Caco-2 (cell line): ENCODE measurements at regions of chr10 and their contacts with region 1.

Region 1: DNA sequence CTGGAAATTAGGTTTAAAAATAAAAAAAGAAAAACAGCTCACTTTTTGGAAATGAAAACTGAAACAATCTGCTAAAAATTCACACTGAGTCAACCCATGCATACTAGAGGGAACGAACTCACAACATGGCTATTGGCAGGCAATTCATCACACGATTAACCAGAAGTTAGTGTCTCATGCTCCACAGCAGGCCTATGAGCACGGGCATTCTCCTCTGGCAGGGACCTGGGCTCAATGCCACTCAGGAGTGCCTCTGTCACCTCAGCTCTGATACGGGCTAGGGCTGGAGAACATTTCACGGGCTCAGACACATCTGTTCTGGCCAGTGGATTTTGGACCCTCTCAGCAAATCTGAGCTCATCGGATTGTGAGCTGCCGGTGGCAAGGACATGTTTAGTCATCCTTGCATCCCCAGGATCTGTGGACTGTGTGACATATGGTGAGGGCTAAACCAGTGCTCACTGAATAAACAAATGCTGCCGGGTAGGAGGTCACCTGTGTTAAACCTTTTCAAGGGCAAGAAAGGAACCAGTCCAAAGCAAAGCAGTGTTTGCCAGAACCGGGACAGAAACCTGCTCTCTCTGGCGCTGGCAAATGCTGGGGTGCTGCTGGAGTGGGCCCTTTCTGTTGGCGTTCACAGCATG is 40.1 kb downstream of the POLR3A start:
- DNase-seq: no peak
- H3K4me3 ChIP-seq: no peak overlapping the region
- H3K4me3 Mint-ChIP-seq: no peak overlapping the region
- H3K27ac Mint-ChIP-seq: no peak overlapping the region
- H3K4me1 ChIP-seq: no peaks in the 10 kb centered on the region
- H3K4me1 Mint-ChIP-seq: no peaks in the 10 kb centered on the region
- H3K27me3 ChIP-seq: no peaks in the 10 kb centered on the region
- H3K27me3 Mint-ChIP-seq: no peaks in the 10 kb centered on the region
- CTCF ChIP-seq: no peak

Region 2: DNA sequence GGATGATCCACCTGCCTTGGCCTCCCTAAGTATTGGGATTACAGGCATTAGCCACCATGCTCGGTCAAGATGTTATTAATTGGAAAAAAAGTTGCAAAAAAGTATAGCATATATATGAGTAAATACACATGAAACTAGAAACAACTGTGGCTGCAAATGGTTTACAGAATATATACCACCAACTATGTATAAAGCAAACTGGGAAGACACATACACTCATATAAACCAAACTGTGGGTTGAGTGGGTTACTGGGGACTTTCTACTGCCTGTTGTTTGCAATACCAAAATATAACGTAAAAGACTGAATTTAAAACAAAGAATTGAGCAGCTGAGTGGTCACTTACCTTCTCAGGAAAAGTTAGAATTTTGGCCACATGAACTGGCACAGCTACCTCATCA is 32.0 kb after region 1 on chr10:
- CTCF ChIA-PET with region 1: no interaction called
- POLR2A ChIA-PET with region 1: no interaction called
- intact Hi-C with region 1: loop called (anchors 1 kb)
- DNase-seq: no peak
- H3K4me3 ChIP-seq: no peak overlapping the region
- H3K4me3 Mint-ChIP-seq: no peak overlapping the region
- H3K27ac Mint-ChIP-seq: no peak overlapping the region
- H3K4me1 ChIP-seq: no peaks in the 10 kb centered on the region
- H3K4me1 Mint-ChIP-seq: no peaks in the 10 kb centered on the region
- H3K27me3 ChIP-seq: no peaks in the 10 kb centered on the region
- H3K27me3 Mint-ChIP-seq: no peaks in the 10 kb centered on the region
- CTCF ChIP-seq: no peak

Region 3: GRCh38 chr10:78047314-78047891 is 58.2 kb after region 1 on chr10:
- CTCF ChIA-PET with region 1: no interaction called
- POLR2A ChIA-PET with region 1: no interaction called
- intact Hi-C with region 1: no loop called
- DNase-seq: peak; percentile 83 to 92
- H3K4me3 ChIP-seq: no peak overlapping the region
- H3K4me3 Mint-ChIP-seq: no peak overlapping the region
- H3K27ac Mint-ChIP-seq: no peak overlapping the region
- H3K4me1 ChIP-seq: no peaks in the 10 kb centered on the region
- H3K4me1 Mint-ChIP-seq: no peaks in the 10 kb centered on the region
- H3K27me3 ChIP-seq: no peaks in the 10 kb centered on the region
- H3K27me3 Mint-ChIP-seq: no peaks in the 10 kb centered on the region
- CTCF ChIP-seq: peak; percentile 91 to 94